ENCODE measurements at regions of chr1 and their contacts with region 1.

Region 1: DNA sequence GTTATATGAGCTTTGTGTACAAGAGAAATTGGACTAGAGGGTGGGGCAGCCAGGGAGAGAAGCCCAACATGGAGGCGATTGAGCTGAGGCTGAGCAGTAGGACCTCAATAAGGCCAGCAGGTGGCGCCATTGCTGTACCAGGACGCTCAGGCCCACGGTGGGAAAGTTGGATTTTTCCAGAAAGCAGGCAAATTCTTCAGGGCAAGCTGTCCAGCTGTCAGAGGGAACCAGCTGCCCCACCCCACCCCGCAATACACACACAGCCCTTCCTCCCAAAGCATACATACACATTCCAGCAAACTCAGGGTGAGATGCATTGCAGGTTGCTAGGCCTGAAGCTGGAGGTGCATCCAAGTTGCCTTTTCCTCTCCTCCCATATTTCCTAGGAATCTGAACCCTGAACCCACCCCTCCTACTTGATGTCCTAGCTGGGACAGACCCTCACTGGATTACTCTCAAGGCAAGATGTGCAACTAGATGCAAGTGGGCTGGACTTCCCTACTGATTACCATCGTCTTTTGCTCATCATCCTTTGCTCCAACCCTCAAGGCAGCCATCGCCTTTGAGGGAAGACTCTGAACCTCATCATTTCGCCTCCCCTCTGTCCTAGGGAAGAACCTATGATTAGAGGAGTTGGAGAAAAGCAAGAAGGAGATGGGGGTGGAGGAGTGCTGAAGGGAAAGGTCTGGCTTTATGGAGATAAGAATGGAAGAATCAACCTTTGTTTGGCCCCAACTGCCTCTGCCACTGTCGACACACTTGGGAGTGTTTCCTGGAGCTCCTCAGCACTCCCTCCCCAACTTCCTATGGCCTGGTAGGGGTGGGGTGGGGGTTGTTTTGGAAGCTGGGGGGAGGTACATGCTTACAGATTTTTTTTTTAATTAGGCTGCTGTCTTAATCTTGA is 25.5 kb downstream of the CD34 start:
- DNase-seq: peak; percentile 94
- H3K4me3 Mint-ChIP-seq: no peak overlapping the region
- H3K27ac Mint-ChIP-seq: no peak overlapping the region
- H3K4me1 Mint-ChIP-seq: peaks cover 40% of the 10 kb centered on the region
- H3K27me3 Mint-ChIP-seq: peaks cover 16% of the 10 kb centered on the region
- CTCF ChIP-seq: peak; percentile 100

Region 2: GRCh38 chr1:207751790-207752455 is 133.5 kb before region 1 on chr1 and contains the start of gene CD46:
- CTCF ChIA-PET with region 1: no interaction called
- POLR2A ChIA-PET with region 1: no interaction called
- intact Hi-C with region 1: no loop called
- DNase-seq: peak; percentile 100
- H3K4me3 Mint-ChIP-seq: peak within 1 kb of the TSS; percentile 99
- H3K27ac Mint-ChIP-seq: peak within 1 kb of the TSS; percentile 96
- H3K4me1 Mint-ChIP-seq: peaks cover 63% of the 10 kb centered on the region
- H3K27me3 Mint-ChIP-seq: no peaks in the 10 kb centered on the region
- CTCF ChIP-seq: no peak
- total RNA-seq, gene CD46: 181 and 184 TPM in 2 replicates

Region 3: GRCh38 chr1:207797229-207797961 is 88.0 kb before region 1 on chr1:
- CTCF ChIA-PET with region 1: interaction called, 18 read pairs
- POLR2A ChIA-PET with region 1: no interaction called
- intact Hi-C with region 1: no loop called
- DNase-seq: peak; percentile 97
- H3K4me3 Mint-ChIP-seq: no peak overlapping the region
- H3K27ac Mint-ChIP-seq: peak overlapping the region; percentile 46
- H3K4me1 Mint-ChIP-seq: peaks cover 14% of the 10 kb centered on the region
- H3K27me3 Mint-ChIP-seq: no peaks in the 10 kb centered on the region
- CTCF ChIP-seq: peak; percentile 95

Region 4: GRCh38 chr1:207838156-207839082 is 47.0 kb before region 1 on chr1:
- CTCF ChIA-PET with region 1: interaction called, 41 read pairs
- POLR2A ChIA-PET with region 1: interaction called, 3 read pairs
- intact Hi-C with region 1: no loop called
- DNase-seq: no peak
- H3K4me3 Mint-ChIP-seq: no peak overlapping the region
- H3K27ac Mint-ChIP-seq: peak overlapping the region; percentile 32
- H3K4me1 Mint-ChIP-seq: peaks cover 34% of the 10 kb centered on the region
- H3K27me3 Mint-ChIP-seq: no peaks in the 10 kb centered on the region
- CTCF ChIP-seq: no peak

Region 5: GRCh38 chr1:207897188-207897587 is 11.8 kb after region 1 on chr1:
- CTCF ChIA-PET with region 1: interaction called, 256 read pairs
- POLR2A ChIA-PET with region 1: interaction called, 12 read pairs
- intact Hi-C with region 1: no loop called
- DNase-seq: peak; percentile 32
- H3K4me3 Mint-ChIP-seq: no peak overlapping the region
- H3K27ac Mint-ChIP-seq: no peak overlapping the region
- H3K4me1 Mint-ChIP-seq: no peaks in the 10 kb centered on the region
- H3K27me3 Mint-ChIP-seq: no peaks in the 10 kb centered on the region
- CTCF ChIP-seq: peak; percentile 63

Region 6: DNA sequence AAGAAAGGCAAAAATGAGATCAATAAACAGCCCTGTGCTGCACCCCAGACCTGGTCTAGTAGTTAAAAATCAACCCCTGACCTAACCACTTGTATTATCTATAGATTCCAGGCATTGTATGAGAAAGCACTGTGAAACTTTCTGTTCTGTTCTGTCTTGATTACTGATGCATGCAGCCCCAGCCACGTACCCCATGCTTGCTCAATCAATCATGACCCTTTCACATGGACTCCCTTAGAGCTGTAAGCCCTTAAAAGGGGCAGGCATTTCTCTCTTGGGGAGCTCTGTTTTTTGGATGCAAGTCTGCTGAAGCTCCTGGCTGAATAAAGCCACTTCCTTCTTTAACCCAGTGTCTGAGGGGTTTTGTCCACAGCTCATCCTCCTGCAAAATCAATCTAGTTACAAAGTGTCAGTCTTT is 49.8 kb after region 1 on chr1:
- CTCF ChIA-PET with region 1: interaction called, 17 read pairs
- POLR2A ChIA-PET with region 1: interaction called, 5 read pairs
- intact Hi-C with region 1: no loop called
- DNase-seq: no peak
- H3K4me3 Mint-ChIP-seq: no peak overlapping the region
- H3K27ac Mint-ChIP-seq: no peak overlapping the region
- H3K4me1 Mint-ChIP-seq: peaks cover 6% of the 10 kb centered on the region
- H3K27me3 Mint-ChIP-seq: no peaks in the 10 kb centered on the region
- CTCF ChIP-seq: no peak

Region 7: DNA sequence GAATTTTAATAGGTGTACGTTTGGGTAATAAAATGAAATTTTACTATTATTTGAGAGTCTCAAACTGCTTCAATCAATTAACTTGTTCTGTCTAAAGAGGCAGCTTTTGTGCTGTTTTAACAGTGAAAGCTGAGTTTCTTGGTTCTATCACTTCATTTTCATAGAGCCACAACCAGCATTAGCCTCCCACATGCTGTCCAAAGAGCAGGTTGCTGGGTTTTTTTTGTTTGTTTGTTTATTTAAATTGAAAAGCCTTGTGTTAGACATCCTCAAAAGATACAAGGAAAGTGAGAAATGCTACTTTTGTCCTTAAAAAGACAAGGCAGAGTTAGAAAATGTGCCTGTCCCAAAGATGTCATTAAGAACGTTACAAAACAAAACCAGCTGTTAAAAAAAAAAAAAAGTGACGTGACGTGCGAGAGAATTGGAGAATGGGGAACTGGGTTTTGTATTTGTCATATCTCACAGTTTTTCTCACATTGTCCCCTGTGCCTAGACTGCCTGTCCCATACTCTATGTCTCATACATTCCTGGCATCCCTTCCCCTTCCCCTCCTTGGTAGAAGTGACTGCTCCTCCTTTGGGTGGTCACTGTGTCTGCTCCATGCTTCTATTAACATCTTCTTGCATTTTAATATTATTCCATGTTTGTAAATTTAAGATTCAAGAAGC is 88.7 kb after region 1 on chr1:
- CTCF ChIA-PET with region 1: interaction called, 66 read pairs
- POLR2A ChIA-PET with region 1: interaction called, 4 read pairs
- intact Hi-C with region 1: no loop called
- DNase-seq: no peak
- H3K4me3 Mint-ChIP-seq: no peak overlapping the region
- H3K27ac Mint-ChIP-seq: no peak overlapping the region
- H3K4me1 Mint-ChIP-seq: no peaks in the 10 kb centered on the region
- H3K27me3 Mint-ChIP-seq: peaks cover 42% of the 10 kb centered on the region
- CTCF ChIP-seq: no peak

Region 8: GRCh38 chr1:208015255-208015654 is 129.9 kb after region 1 on chr1:
- CTCF ChIA-PET with region 1: interaction called, 14 read pairs
- POLR2A ChIA-PET with region 1: interaction called, 3 read pairs
- intact Hi-C with region 1: no loop called
- DNase-seq: no peak
- H3K4me3 Mint-ChIP-seq: no peak overlapping the region
- H3K27ac Mint-ChIP-seq: no peak overlapping the region
- H3K4me1 Mint-ChIP-seq: no peaks in the 10 kb centered on the region
- H3K27me3 Mint-ChIP-seq: peaks cover 14% of the 10 kb centered on the region
- CTCF ChIP-seq: no peak